PC-9 (cell line): ENCODE measurements at regions of chr16 and their contacts with region 1.

Region 1: DNA sequence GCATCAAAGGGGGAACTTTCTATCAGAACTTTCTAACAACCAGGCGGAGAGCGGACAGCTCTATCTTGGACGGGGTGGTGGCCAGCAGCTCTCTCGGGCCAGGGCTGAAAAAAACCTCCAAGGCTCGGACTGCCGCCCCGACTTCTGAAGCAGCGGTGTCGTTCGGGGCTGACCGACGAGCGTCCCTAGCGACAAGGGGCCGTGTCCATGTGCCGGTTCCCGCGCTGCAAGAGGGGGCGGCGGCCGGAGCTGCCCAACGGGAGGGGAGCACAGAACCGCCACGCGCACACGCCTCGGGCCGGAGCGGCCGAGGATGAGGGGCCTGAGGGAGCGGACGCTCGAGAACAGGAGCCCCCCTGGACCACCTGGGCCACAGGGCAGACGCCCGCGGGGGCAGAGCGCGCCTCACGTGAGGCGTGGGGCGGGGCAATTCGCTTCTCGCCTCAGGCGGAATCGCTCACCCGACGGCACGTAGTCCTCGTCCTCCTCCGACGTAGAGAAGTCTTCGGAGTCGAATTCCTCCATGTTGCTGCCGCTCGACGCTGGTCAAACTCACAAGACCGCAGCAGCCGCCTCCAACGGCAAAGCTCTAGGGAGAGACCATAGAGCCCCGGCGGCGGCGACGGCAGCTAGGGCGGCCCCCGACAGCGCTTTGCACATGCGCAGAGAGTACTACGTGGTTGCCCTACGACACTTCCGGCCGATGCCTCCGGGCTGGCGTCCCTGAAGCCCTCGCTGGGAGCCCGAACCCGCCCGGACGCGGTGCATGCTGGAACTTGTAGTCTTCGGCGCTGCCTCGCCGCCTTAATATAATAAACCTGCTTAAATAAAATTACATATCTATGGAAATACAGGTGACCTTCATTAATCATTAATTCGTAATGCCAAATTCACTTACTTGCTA is at the start of gene CFDP1:
- DNase-seq: peak; percentile 81 to 94
- H3K4me3 ChIP-seq: peak within 1 kb of the TSS; percentile 92
- H3K27ac ChIP-seq: peak within 1 kb of the TSS; percentile 80
- H3K4me1 ChIP-seq: peaks cover 13% of the 10 kb centered on the region; the same call in 1 of the 2 replicates
- H3K27me3 ChIP-seq: no peaks in the 10 kb centered on the region
- CTCF ChIP-seq: no peak
- total RNA-seq, gene CFDP1: 52.6 and 55.6 TPM in 2 replicates

Region 2: GRCh38 chr16:75420987-75421819 is 11.9 kb before region 1 on chr16:
- CTCF ChIA-PET with region 1: no interaction called
- POLR2A ChIA-PET with region 1: interaction called, 11 read pairs
- intact Hi-C with region 1: no loop called
- DNase-seq: peak in 1 of 2 experiments; percentile 58
- H3K4me3 ChIP-seq: no peak overlapping the region
- H3K27ac ChIP-seq: no peak overlapping the region
- H3K4me1 ChIP-seq: no peaks in the 10 kb centered on the region
- H3K27me3 ChIP-seq: no peaks in the 10 kb centered on the region
- CTCF ChIP-seq: no peak

Region 3: GRCh38 chr16:75464130-75464918 is 31.2 kb after region 1 on chr16 and contains the start of gene TMEM170A:
- CTCF ChIA-PET with region 1: no interaction called
- POLR2A ChIA-PET with region 1: no interaction called
- intact Hi-C with region 1: loop called (anchors 2 kb)
- DNase-seq: peak; percentile 91 to 99
- H3K4me3 ChIP-seq: peak within 1 kb of the TSS; percentile 61
- H3K27ac ChIP-seq: peak within 1 kb of the TSS; percentile 45
- H3K4me1 ChIP-seq: peaks cover 18% of the 10 kb centered on the region
- H3K27me3 ChIP-seq: no peaks in the 10 kb centered on the region
- CTCF ChIP-seq: peak; percentile 100
- total RNA-seq, gene TMEM170A: 31.4 and 31.7 TPM in 2 replicates